Activated CD8-positive, alpha-beta T cell treated with anti-CD3 and anti-CD28 coated beads for 36 hours (primary cell): ENCODE measurements at regions of chr1 and their contacts with region 1.

Region 1: GRCh38 chr1:24964811-24965570 is 34.9 kb upstream of the RUNX3 start:
- DNase-seq: peak; percentile 99
- ATAC-seq: peak; percentile 69
- H3K4me3 Mint-ChIP-seq: peak overlapping the region; percentile 99
- H3K27ac Mint-ChIP-seq: peak overlapping the region; percentile 98
- H3K4me1 Mint-ChIP-seq: peaks cover 63% of the 10 kb centered on the region
- H3K27me3 Mint-ChIP-seq: no peaks in the 10 kb centered on the region
- CTCF ChIP-seq: no peak

Region 2: GRCh38 chr1:24923485-24924113 is 41.4 kb before region 1 on chr1:
- CTCF ChIA-PET with region 1: interaction called, 17 read pairs
- POLR2A ChIA-PET with region 1: interaction called, 113 read pairs
- intact Hi-C with region 1: loop called (anchors 2 kb)
- DNase-seq: peak; percentile 54
- ATAC-seq: peak; percentile 9
- H3K4me3 Mint-ChIP-seq: peak overlapping the region; percentile 96
- H3K27ac Mint-ChIP-seq: peak overlapping the region; percentile 72
- H3K4me1 Mint-ChIP-seq: peaks cover 85% of the 10 kb centered on the region
- H3K27me3 Mint-ChIP-seq: no peaks in the 10 kb centered on the region
- CTCF ChIP-seq: no peak

Region 3: GRCh38 chr1:24978383-24979032 is 13.5 kb after region 1 on chr1:
- CTCF ChIA-PET with region 1: interaction called, 40 read pairs
- POLR2A ChIA-PET with region 1: interaction called, 59 read pairs
- intact Hi-C with region 1: no loop called
- DNase-seq: no peak
- ATAC-seq: peak; percentile 55
- H3K4me3 Mint-ChIP-seq: peak overlapping the region; percentile 12
- H3K27ac Mint-ChIP-seq: peak overlapping the region; percentile 59
- H3K4me1 Mint-ChIP-seq: peaks cover 72% of the 10 kb centered on the region
- H3K27me3 Mint-ChIP-seq: no peaks in the 10 kb centered on the region
- CTCF ChIP-seq: no peak

Region 4: GRCh38 chr1:25022361-25023189 is 57.6 kb after region 1 on chr1:
- CTCF ChIA-PET with region 1: interaction called, 24 read pairs
- POLR2A ChIA-PET with region 1: interaction called, 172 read pairs
- intact Hi-C with region 1: no loop called
- DNase-seq: peak; percentile 99
- ATAC-seq: peak; percentile 84
- H3K4me3 Mint-ChIP-seq: peak overlapping the region; percentile 75
- H3K27ac Mint-ChIP-seq: peak overlapping the region; percentile 94
- H3K4me1 Mint-ChIP-seq: peaks cover 91% of the 10 kb centered on the region
- H3K27me3 Mint-ChIP-seq: no peaks in the 10 kb centered on the region
- CTCF ChIP-seq: no peak

Region 5: GRCh38 chr1:25099343-25099951 is 134.5 kb after region 1 on chr1:
- CTCF ChIA-PET with region 1: interaction called, 10 read pairs
- POLR2A ChIA-PET with region 1: interaction called, 18 read pairs
- intact Hi-C with region 1: no loop called
- DNase-seq: peak; percentile 87
- ATAC-seq: peak; percentile 74
- H3K4me3 Mint-ChIP-seq: peak overlapping the region; percentile 42
- H3K27ac Mint-ChIP-seq: peak overlapping the region; percentile 76
- H3K4me1 Mint-ChIP-seq: peaks cover 73% of the 10 kb centered on the region
- H3K27me3 Mint-ChIP-seq: no peaks in the 10 kb centered on the region
- CTCF ChIP-seq: no peak

Region 6: DNA sequence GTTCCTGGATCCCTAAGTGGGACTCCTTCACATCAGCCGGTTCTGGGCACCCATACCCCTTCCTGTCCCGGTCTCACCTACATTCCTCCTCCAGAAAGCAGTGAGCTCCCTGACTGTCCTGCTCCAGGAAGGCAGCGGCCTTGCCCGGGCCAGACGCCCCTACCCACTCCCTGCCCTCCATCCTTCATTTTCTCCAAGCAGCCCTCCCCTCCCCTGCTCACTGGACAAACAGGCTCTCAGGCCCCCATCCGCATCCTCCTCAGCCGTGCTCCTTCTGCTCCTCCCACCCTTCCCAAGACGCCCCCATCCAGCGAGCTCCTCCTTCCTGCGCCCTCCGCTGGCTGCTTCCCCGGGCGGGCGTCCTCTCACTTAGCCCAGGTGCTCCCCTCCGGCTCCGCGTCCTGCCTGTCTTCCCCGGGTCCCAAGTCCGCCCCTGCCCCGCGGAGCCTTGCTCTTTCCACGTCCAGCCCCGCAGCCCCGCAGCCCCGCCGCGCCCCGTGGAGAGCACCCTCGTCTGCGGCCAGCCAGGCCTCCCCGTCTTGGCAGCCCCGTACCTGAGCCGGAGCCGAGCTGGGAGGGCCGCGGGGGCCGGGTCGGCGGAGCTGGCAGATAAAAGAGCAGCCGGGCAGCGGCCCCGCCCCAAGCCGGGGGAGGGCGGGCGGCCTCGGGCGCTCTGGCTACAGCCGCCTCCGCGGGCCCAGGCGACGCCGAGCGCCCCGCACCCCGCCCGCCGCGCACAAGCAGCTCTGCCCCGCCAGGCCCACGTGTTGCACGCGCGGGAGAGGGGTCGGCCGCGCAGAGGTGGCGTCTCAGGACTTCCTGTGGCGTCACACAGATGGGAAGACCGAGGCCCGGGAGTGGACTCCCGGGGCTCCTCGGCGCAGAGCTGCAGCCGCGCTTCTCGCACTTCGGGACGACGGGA is 910.2 kb after region 1 on chr1 and contains the start of gene PAQR7:
- CTCF ChIA-PET with region 1: no interaction called
- POLR2A ChIA-PET with region 1: no interaction called
- intact Hi-C with region 1: no loop called
- DNase-seq: peak; percentile 77
- ATAC-seq: peak; percentile 88
- H3K4me3 Mint-ChIP-seq: peak within 1 kb of the TSS; percentile 88
- H3K27ac Mint-ChIP-seq: peak within 1 kb of the TSS; percentile 81
- H3K4me1 Mint-ChIP-seq: peaks cover 5% of the 10 kb centered on the region
- H3K27me3 Mint-ChIP-seq: peaks cover 4% of the 10 kb centered on the region
- CTCF ChIP-seq: no peak
- total RNA-seq, gene PAQR7: 6.8 to 8.0 TPM